ENCODE measurements at regions of chr15 and their contacts with region 1.

Region 1: DNA sequence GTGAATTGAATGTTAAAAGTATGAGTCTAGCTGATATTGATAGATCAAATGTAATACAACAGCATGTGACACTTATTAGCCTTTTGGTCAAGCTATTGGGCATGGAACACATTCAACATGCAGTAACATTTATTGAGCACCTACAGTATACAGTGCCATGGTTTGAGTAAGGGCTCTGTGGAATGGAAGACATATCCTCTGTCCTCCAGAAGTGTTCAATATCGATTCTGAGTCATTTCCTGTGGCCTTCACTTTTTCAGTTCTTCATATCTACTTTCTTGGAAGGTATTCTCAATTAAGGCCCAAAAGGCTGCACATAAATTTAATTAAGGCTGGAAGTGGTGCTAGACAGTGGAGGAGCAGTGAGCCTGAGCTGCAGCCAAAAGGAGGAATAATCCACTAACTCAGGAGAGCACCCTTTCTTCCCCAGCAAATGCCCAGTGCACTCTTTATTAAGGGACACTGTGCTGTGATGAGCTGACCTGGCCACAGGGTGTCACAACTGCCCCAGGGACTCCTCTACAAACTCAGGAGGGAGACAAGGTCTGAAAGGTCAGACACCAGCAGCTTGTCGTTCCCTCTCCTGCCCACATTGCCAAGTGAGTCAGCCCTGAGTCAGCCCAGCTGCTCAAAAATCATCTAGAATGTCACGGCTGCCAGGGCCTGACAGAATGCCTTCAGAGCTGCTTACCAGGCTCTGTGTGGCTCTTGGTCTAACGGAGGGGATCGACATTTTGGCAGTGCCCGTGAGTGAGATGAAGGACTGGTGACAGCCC is 544.8 kb downstream of the AGBL1 start:
- DNase-seq: peak; percentile 91
- H3K4me3 Mint-ChIP-seq: peak overlapping the region; percentile 24
- H3K27ac Mint-ChIP-seq: peak overlapping the region; percentile 55
- H3K4me1 Mint-ChIP-seq: peaks cover 38% of the 10 kb centered on the region
- H3K27me3 Mint-ChIP-seq: no peaks in the 10 kb centered on the region

Region 2: DNA sequence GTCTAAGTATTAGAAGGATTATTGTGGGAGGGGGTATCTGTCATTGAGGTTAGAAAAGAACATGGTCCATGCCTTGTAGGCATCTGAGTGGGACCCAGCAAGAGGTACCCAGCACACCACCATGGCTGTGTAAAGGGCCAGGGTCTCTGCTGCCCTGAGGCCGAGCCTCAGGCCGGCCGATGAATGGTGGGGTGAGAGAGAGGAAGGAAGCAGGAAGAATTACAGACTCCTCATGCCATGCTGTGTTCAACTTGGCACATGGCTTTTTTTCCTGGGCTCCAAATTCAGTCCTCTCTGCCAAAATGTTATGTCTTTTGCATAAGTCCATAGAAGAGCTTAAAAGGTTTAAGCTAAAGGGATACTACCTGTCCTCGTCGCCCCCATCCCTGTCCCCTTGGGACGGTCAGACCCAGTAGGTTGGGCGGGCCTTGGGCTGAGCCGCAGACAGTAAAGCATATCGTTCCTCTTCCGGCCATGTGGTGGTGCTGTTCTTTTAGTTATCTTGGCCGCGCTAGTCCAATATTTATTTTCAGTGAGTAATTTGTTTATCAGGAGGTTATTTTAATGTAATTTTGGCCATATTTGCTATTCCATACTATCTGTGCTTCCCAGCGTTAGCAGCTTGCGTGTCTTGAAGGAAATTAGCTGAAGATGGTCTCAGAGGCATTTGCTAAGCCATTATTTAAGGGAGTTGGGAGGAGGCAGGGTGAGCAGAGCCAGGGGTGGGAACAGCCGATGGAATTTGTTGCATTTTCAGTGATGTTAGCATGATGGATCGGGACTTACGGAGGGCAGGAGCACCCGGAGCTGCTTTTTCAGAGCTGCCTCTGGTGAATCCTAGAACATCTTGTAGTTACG is 392.4 kb before region 1 on chr15:
- CTCF ChIA-PET with region 1: interaction called, 3 read pairs
- POLR2A ChIA-PET with region 1: no interaction called
- intact Hi-C with region 1: loop called (anchors 5 kb)
- DNase-seq: peak; percentile 34
- H3K4me3 Mint-ChIP-seq: no peak overlapping the region
- H3K27ac Mint-ChIP-seq: no peak overlapping the region
- H3K4me1 Mint-ChIP-seq: peaks cover 3% of the 10 kb centered on the region
- H3K27me3 Mint-ChIP-seq: peaks cover 27% of the 10 kb centered on the region

Region 3: GRCh38 chr15:86300390-86301125 is 323.9 kb before region 1 on chr15:
- CTCF ChIA-PET with region 1: no interaction called
- POLR2A ChIA-PET with region 1: no interaction called
- intact Hi-C with region 1: no loop called
- DNase-seq: no peak
- H3K4me3 Mint-ChIP-seq: no peak overlapping the region
- H3K27ac Mint-ChIP-seq: no peak overlapping the region
- H3K4me1 Mint-ChIP-seq: no peaks in the 10 kb centered on the region
- H3K27me3 Mint-ChIP-seq: peaks cover 4% of the 10 kb centered on the region

Region 4: GRCh38 chr15:86611417-86612040 is 12.9 kb before region 1 on chr15:
- CTCF ChIA-PET with region 1: interaction called, 10 read pairs
- POLR2A ChIA-PET with region 1: no interaction called
- intact Hi-C with region 1: loop called (anchors 2 kb)
- DNase-seq: peak; percentile 27
- H3K4me3 Mint-ChIP-seq: no peak overlapping the region
- H3K27ac Mint-ChIP-seq: peak overlapping the region; percentile 11
- H3K4me1 Mint-ChIP-seq: peaks cover 55% of the 10 kb centered on the region
- H3K27me3 Mint-ChIP-seq: no peaks in the 10 kb centered on the region

Region 5: DNA sequence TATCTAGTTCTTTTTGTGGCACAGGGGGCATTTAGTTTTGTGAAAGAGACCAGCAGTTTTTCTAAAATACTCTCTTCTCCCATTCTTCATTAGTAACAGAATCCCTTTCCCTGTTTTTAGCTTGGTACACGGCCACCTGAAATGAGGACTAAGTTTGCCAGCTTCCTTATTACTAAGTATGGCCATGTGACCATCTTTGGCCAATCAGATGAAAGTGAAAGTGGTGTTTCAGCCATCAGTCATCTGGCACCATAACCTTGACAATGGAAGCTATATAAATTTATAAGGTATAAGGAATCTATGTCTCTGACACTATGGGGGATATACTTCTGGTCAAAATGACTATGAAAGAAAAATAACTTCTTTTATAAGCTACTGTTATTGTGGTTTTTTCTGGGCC is 25.6 kb after region 1 on chr15:
- CTCF ChIA-PET with region 1: interaction called, 21 read pairs
- POLR2A ChIA-PET with region 1: interaction called, 6 read pairs
- intact Hi-C with region 1: loop called (anchors 1 kb)
- DNase-seq: peak; percentile 20
- H3K4me3 Mint-ChIP-seq: no peak overlapping the region
- H3K27ac Mint-ChIP-seq: peak overlapping the region; percentile 87
- H3K4me1 Mint-ChIP-seq: peaks cover 56% of the 10 kb centered on the region
- H3K27me3 Mint-ChIP-seq: no peaks in the 10 kb centered on the region

Region 6: DNA sequence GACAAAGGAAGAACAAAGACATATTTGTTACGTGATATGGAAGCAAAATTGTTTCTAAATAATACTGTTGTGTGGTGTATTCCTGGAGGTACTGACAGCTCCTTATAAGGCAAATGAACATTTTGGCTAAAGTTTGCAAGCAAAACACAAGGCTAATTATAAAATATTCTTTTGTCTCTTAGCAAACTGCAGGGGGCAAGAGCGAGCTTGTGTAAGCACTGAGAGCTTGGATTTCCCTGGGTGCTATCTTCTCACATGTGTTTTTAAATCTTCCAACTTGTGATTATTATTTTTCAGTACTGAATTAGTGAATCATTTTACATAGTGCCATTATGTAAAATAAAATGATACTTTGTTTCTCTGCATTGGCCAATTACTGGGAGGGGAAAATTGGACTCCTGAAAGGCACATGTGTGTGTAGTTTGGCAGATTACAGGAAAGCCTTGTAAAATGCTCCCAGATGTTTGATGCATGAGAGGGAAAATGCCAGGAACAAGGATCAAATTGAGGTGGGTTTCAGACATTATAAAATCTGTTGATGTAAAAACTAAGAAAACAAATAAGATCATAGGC is 66.7 kb after region 1 on chr15:
- CTCF ChIA-PET with region 1: no interaction called
- POLR2A ChIA-PET with region 1: no interaction called
- intact Hi-C with region 1: no loop called
- DNase-seq: no peak
- H3K4me3 Mint-ChIP-seq: no peak overlapping the region
- H3K27ac Mint-ChIP-seq: no peak overlapping the region
- H3K4me1 Mint-ChIP-seq: peaks cover 4% of the 10 kb centered on the region
- H3K27me3 Mint-ChIP-seq: peaks cover 1% of the 10 kb centered on the region